HepG2 (cell line): ENCODE measurements at regions of chr14 and their contacts with region 1.

Region 1: DNA sequence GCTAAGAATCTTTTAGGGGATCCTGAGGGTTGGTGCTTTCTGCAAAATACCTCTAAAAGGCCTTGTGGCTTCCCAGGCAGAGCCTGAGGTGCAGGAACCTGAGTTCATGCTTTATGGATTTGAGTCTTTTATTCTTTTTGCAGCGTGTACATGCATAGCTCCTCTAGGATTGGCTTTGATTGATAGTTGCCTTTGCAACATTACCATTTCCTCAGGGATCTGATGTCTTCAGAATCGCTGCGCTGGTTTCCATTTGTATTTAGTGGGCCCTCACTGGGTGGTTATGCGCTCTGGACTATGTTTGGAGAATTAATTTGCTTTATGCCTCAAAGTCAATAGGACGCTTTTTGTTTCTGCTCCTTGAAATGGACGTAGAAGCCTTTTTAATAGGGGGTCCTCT is 16.1 kb downstream of the NRXN3 start:
- DNase-seq: no peak
- ATAC-seq: no peak
- H3K4me3 ChIP-seq: no peak overlapping the region
- H3K27ac ChIP-seq: no peak overlapping the region
- H3K4me1 ChIP-seq: no peaks in the 10 kb centered on the region
- H3K27me3 ChIP-seq: peaks cover 0 to 15% of the 10 kb centered on the region in 2 experiments; a peak in 1 of 5 replicates
- CTCF ChIP-seq: no peak
- EP300 ChIP-seq: no peak
- POLR2A ChIP-seq: no peak
- RAD21 ChIP-seq: no peak

Region 2: DNA sequence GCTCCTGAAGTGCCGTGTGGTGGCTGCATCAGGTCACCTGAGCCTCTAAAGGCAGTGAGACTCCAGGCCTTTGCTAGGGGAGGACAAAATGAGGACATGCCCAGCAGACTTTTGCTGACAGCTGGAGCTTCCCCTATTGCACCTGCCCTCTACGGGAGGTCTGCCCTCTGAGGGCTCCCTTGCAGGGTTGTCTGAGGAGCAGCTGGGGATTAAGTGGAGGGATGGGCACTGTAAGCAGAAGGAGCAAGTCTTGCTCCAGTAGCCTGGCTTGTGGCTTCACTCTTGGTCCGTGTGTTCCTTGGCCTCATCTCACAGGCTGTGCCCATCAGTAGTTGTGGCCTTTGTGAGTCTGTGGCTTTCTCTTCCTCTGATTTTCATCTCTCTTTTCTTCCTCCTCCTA is 83.0 kb before region 1 on chr14:
- CTCF ChIA-PET with region 1: no interaction called
- POLR2A ChIA-PET with region 1: no interaction called
- in situ Hi-C with region 1: no loop called
- intact Hi-C with region 1: loop called (anchors 2 kb)
- DNase-seq: no peak
- ATAC-seq: no peak
- H3K4me3 ChIP-seq: no peak overlapping the region
- H3K27ac ChIP-seq: no peak overlapping the region
- H3K4me1 ChIP-seq: no peaks in the 10 kb centered on the region
- H3K27me3 ChIP-seq: 0 out of 5 replicates have a peak, but pooled peaks cover 0 to 1% of the 10 kb centered on the region in 2 experiments
- CTCF ChIP-seq: no peak
- EP300 ChIP-seq: no peak
- POLR2A ChIP-seq: no peak
- RAD21 ChIP-seq: no peak

Region 3: DNA sequence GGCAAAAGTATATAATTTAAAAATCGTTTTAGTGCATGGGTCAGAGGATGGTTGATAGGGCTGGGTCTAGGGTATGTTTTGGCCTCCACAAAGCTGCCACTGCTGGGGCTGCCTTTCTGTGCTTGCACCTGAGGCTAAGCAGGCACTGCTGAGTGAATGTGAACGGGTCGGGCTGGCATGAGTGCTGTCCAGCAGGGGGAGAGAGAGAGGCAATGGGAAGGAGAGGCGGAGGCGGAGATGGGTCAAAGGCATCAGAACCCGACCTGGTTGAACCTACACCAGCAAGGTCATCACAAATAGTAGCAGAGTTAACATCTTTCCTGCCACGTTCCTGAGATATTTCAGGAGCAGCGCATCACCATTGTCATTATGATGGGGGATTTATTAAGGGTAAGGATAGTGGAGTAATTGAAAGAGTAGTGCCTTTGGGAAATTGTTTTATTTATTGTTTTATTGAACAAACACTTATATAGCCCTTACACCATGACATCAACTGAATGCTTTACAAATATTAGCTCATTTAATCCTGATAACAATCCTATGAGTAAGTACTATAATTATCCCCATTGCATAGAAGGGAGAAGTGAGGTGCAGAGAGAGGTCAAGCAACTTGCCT is 21.9 kb before region 1 on chr14:
- CTCF ChIA-PET with region 1: no interaction called
- POLR2A ChIA-PET with region 1: no interaction called
- in situ Hi-C with region 1: no loop called
- intact Hi-C with region 1: no loop called
- DNase-seq: peak; percentile 15
- ATAC-seq: peak; percentile 98
- H3K4me3 ChIP-seq: no peak overlapping the region
- H3K27ac ChIP-seq: no peak overlapping the region
- H3K4me1 ChIP-seq: no peaks in the 10 kb centered on the region
- H3K27me3 ChIP-seq: 0 out of 5 replicates have a peak, but pooled peaks cover 0 to 3% of the 10 kb centered on the region in 2 experiments
- CTCF ChIP-seq: peak; percentile 77
- EP300 ChIP-seq: no peak
- POLR2A ChIP-seq: no peak
- RAD21 ChIP-seq: no peak